ENCODE measurements at regions of chr10 and their contacts with region 1.

Region 1: GRCh38 chr10:124741281-124741921 is 2.8 kb downstream of the FAM53B start:
- DNase-seq: peak; percentile 84
- ATAC-seq: peak; percentile 61
- H3K4me3 Mint-ChIP-seq: peak overlapping the region; percentile 58
- H3K27ac Mint-ChIP-seq: peak overlapping the region; percentile 33
- H3K4me1 Mint-ChIP-seq: peaks cover 69% of the 10 kb centered on the region
- H3K27me3 Mint-ChIP-seq: peaks cover 6% of the 10 kb centered on the region

Region 2: DNA sequence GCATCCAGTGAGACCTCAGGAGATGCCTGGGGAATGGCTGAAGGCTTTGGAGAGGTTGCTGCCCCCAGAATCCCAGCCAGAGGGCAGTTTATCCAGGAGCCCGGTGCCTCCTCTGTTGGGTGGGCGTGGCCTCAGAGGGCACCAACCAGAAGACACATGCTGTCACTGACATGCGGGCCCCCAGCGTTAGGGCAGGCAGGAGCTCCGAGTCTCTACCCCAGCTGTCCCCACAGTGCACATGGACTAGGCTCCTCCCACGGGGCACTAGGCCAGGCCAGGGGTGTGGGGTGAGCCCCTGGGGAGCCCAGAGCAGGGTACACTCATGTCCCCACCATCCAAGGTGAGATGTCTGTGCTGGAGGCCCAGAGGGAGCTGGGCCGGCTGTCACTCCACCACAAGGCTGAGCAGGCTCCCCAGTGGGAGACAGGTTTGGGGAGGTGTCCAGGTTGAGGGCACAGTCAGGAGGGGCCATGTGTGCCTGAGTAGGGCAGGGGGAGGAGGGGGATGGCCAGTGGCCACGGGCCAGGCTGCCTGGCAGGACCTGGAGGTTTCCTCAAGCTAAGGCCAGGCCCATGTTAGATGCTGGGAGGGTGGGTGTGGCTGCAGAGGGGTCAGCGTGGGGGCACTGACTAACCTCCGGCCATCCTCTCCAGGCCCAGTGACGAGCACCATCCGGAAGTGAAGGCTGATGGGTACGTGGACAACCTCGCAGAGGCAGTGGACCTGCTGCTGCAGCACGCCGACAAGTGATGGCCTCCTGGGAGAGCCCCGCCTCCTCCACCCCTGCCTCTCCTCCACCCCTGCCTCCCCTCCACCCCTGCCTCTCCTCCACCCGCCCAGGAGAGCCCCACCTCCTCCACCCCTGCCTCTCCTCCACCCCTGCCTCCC is 128.5 kb before region 1 on chr10:
- CTCF ChIA-PET with region 1: interaction called, 16 read pairs
- POLR2A ChIA-PET with region 1: no interaction called
- DNase-seq: peak; percentile 28
- ATAC-seq: peak; percentile 14
- H3K4me3 Mint-ChIP-seq: no peak overlapping the region
- H3K27ac Mint-ChIP-seq: peak overlapping the region; percentile 72
- H3K4me1 Mint-ChIP-seq: peaks cover 38% of the 10 kb centered on the region
- H3K27me3 Mint-ChIP-seq: no peaks in the 10 kb centered on the region

Region 3: GRCh38 chr10:124659380-124659779 is 82.0 kb before region 1 on chr10:
- CTCF ChIA-PET with region 1: interaction called, 15 read pairs
- POLR2A ChIA-PET with region 1: no interaction called
- DNase-seq: no peak
- ATAC-seq: no peak
- H3K4me3 Mint-ChIP-seq: no peak overlapping the region
- H3K27ac Mint-ChIP-seq: peak overlapping the region; percentile 36
- H3K4me1 Mint-ChIP-seq: peaks cover 44% of the 10 kb centered on the region
- H3K27me3 Mint-ChIP-seq: no peaks in the 10 kb centered on the region

Region 4: GRCh38 chr10:124688889-124689670 is 52.3 kb before region 1 on chr10:
- CTCF ChIA-PET with region 1: interaction called, 25 read pairs
- POLR2A ChIA-PET with region 1: interaction called, 4 read pairs
- DNase-seq: peak; percentile 67
- ATAC-seq: peak; percentile 92
- H3K4me3 Mint-ChIP-seq: peak overlapping the region; percentile 10
- H3K27ac Mint-ChIP-seq: peak overlapping the region; percentile 76
- H3K4me1 Mint-ChIP-seq: peaks cover 64% of the 10 kb centered on the region
- H3K27me3 Mint-ChIP-seq: no peaks in the 10 kb centered on the region

Region 5: GRCh38 chr10:124708922-124709520 is 32.4 kb before region 1 on chr10:
- CTCF ChIA-PET with region 1: interaction called, 67 read pairs
- POLR2A ChIA-PET with region 1: interaction called, 3 read pairs
- DNase-seq: no peak
- ATAC-seq: no peak
- H3K4me3 Mint-ChIP-seq: no peak overlapping the region
- H3K27ac Mint-ChIP-seq: no peak overlapping the region
- H3K4me1 Mint-ChIP-seq: peaks cover 56% of the 10 kb centered on the region
- H3K27me3 Mint-ChIP-seq: no peaks in the 10 kb centered on the region

Measured in activated CD8-positive, alpha-beta T cell treated with anti-CD3 and anti-CD28 coated beads, Interleukin-2, amount 10 ng/mL, durations not matched to agents 7 days and 5 days (primary cell).